Activated CD4-positive, alpha-beta memory T cell treated with anti-CD3 and anti-CD28 coated beads for 36 hours (primary cell): ENCODE measurements at regions of chr7 and their contacts with region 1.

Region 1: GRCh38 chr7:100141555-100141949 is 7.2 kb upstream of the LAMTOR4 start:
- DNase-seq: no peak
- H3K4me3 Mint-ChIP-seq: no peak overlapping the region
- H3K27ac Mint-ChIP-seq: no peak overlapping the region
- H3K4me1 Mint-ChIP-seq: peaks cover 11% of the 10 kb centered on the region
- H3K27me3 Mint-ChIP-seq: peaks cover 2% of the 10 kb centered on the region

Region 2: DNA sequence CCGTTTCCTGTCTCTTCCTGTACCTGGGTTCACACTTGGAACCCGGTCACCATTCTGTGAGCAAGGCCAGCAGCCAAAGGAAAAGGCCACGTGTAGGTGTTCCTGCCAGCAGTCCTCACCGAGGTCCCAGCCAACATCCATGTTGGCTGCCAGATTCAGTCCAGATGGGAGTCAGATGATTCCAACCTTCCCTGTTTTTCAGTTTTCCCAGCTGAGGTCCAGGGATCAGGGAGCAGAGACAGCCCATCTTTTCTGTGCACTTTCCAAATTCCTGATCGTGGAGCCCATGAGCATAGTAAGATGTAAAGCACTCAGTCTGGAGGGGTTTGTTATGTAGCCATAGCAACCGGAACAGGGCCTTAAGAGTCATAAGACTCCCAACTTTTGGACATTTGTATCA is 74.3 kb after region 1 on chr7:
- CTCF ChIA-PET with region 1: interaction called, 3 read pairs
- POLR2A ChIA-PET with region 1: no interaction called
- intact Hi-C with region 1: loop called (anchors 1 kb)
- DNase-seq: no peak
- H3K4me3 Mint-ChIP-seq: no peak overlapping the region
- H3K27ac Mint-ChIP-seq: peak overlapping the region; percentile 46
- H3K4me1 Mint-ChIP-seq: peaks cover 49% of the 10 kb centered on the region
- H3K27me3 Mint-ChIP-seq: no peaks in the 10 kb centered on the region